RWPE1 (cell line): ENCODE measurements at regions of chr6 and their contacts with region 1.

Region 1: DNA sequence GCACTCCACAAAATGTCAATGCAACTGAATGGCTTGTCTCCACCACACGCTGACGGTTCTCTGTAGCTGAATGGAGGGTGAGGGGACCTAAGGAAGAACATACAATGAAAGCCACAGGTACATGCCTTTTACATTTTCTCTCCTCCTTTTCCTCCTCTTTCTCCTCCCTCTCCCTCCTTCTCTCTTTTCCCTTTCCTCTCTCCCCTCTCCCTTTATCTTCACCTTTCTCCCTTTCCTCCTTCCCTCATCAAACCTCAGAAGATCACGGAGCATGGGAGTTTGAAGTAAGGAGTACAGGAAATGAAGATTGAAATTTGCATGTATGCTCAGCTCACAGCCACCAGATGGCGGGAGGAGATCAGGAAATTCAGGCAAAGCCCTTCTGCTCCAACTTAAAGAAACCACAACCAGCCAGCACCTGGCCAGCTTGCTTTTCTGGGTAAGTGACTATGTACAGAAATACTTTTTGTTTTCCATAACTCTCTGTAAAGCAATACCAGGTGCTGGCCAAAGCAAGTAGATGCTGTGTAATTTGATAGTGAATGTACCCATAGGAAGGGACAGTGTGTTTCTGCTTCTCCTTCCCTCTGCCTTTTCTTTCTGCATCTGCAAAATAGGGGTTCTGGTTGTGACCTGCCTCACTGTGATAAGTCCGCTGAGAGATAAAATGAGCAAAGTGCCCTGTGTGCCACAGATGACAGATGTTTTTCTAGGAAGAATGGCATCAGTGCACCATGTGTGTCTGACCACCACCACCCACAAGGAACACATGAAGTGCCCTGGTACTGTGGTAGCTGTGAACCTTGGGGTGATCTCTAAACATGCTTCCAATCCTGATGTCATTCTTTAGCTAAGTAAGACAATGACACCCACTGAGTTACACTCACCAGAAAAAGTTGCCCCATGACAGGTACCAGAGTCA is 18.6 kb upstream of the FOXO3 start:
- DNase-seq: peak; percentile 74
- H3K27ac ChIP-seq: no peak overlapping the region
- CTCF ChIP-seq: peak; percentile 79

Region 2: GRCh38 chr6:108403236-108403635 is 138.9 kb before region 1 on chr6:
- CTCF ChIA-PET with region 1: no interaction called
- POLR2A ChIA-PET with region 1: no interaction called
- DNase-seq: no peak
- H3K27ac ChIP-seq: no peak overlapping the region
- CTCF ChIP-seq: no peak

Region 3: DNA sequence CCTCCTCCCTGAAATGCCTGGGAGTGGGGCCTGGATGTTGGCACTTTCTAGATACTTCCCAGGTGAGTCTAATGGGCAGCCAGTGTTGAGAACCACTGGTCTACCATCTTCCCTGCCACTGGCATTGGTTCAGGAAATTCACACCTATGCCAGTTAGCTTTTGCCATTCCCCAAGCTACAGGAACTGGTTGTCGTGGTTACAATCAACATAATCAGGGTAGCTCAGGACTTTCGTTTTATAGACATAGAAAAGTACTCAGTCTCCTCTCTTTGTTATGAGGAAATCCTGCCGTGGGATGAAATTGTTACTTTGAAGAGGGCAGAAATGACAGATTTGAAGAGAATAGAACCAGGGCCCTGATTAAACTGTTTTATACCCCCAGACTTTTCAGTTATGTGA is 109.3 kb before region 1 on chr6:
- CTCF ChIA-PET with region 1: no interaction called
- POLR2A ChIA-PET with region 1: no interaction called
- DNase-seq: no peak
- H3K27ac ChIP-seq: no peak overlapping the region
- CTCF ChIP-seq: no peak

Region 4: GRCh38 chr6:108673153-108673552 is 131.1 kb after region 1 on chr6:
- CTCF ChIA-PET with region 1: no interaction called
- POLR2A ChIA-PET with region 1: no interaction called
- DNase-seq: no peak
- H3K27ac ChIP-seq: peak overlapping the region; percentile 32
- CTCF ChIP-seq: no peak

Region 5: DNA sequence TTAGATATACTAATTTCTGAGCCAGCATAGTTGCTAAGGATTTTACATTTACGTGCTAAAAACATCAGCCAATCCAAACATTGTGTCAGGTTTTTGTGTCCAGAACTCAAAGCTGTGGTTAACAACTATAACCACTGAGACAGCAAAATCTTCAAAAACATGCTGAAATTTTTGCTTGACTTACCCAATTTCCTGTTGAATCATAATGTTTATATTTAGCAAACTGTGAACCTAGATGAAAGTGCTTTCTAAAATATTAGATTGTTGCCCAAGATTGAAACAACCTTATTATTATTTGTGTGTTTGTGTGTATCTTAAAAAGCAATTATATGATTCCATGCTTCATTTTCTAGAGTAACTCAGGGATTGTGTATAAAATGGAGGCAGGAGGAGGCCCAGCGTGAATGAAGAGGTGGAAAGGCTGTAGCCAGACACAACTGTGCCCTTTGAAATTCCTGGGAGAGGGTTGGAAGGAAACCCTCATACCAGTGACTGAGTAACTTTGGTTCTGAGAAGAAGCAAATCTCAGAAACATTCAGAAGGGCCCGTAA is 354.1 kb after region 1 on chr6:
- CTCF ChIA-PET with region 1: interaction called, 21 read pairs
- POLR2A ChIA-PET with region 1: no interaction called
- DNase-seq: peak; percentile 20
- H3K27ac ChIP-seq: no peak overlapping the region
- CTCF ChIP-seq: no peak

Region 6: GRCh38 chr6:109073344-109074132 is 531.4 kb after region 1 on chr6:
- CTCF ChIA-PET with region 1: interaction called, 11 read pairs
- POLR2A ChIA-PET with region 1: no interaction called
- DNase-seq: peak; percentile 40
- H3K27ac ChIP-seq: no peak overlapping the region
- CTCF ChIP-seq: peak; percentile 66